BJ (cell line): ENCODE measurements at regions of chr5 and their contacts with region 1.

Region 1: DNA sequence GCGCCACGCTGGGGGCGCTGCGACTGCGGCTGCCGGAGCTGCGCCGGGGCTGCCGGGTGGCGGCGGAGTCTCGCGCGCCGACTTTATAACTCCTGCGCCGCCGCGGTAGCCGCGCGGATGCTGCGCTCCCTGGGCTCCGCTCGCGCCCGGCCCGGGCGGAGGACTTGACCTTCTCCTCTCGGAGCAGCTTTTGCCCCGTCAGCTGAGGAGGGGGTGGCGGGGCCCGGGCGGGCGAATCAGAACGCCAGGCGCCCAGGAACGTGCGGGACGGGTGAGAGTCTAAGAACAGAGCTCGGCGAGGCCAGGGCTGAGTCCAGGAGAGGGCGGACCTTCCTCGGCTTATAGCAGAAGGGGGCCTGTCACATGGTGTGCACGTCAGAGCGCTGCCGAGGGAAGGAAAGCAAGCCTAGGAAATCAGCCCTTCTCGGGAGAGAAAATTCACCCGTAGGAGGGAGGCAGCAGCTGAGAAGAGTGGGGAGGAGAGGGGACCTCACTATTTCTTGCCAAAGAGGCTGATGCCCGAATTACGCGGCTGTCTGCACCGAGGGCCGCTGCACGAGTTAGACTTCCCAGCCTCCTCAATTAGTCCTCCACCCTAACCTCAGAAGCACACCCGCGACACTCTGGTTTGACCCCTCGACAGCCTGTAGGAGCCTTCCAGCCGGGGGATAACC is at the start of gene FOXD1:
- DNase-seq: peak; percentile 65
- H3K4me3 ChIP-seq: peak within 1 kb of the TSS; percentile 80
- H3K27me3 ChIP-seq: peaks cover 5% of the 10 kb centered on the region
- CTCF ChIP-seq: peak; percentile 11; the same call in 1 of the 2 replicates
- polyA plus RNA-seq, gene FOXD1: 4.3 and 4.9 TPM in 2 replicates

Region 2: GRCh38 chr5:73088026-73088425 is 360.6 kb before region 1 on chr5:
- CTCF ChIA-PET with region 1: interaction called, 20 read pairs
- POLR2A ChIA-PET with region 1: no interaction called
- DNase-seq: no peak
- H3K4me3 ChIP-seq: no peak overlapping the region
- H3K27me3 ChIP-seq: no peaks in the 10 kb centered on the region
- CTCF ChIP-seq: no peak

Region 3: DNA sequence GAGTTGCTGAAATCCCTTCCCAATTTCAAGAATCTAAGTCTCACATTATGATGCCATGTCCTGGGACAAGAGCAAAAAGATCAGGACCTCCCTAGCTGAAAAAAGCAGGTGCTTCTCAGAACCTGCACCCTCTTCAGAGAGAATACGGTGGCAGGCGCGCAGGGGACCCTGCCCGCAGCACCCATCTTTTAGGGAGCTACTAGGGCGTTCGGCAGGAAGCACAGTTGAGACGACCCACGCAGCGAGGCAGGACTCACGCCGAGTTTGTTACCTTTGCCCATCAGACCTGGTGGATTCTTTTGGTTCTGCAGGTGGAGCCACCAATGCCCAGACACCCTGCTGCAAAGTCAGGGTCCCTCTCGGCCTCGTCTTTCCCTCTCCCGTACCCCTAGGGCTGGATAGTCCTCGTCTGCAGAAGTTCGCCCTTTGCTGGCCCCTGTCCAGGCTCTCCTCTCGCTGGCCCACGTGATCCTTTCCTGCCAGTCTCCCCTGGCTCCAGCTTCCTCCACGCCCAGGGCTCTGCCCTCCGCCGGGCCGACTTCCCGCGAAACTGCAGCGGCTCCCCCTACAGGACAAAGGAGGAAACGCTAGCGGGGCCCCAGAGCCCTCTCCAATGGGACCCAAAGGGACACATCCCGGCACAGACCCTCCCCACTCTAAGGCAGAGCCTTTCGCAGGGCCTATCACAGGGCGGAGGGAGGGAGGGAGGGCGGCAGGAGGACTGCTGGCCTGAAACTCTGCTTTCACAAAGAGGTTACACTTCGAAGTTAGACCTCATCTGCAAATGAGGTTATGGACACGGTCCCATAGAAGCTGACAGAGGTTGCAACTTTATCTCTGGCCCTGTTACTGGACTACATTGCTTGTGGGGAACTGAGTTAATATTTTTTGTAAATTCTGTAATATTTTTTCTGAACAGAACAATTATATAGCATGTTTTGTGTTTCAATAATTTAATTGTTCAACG is 246.8 kb before region 1 on chr5:
- CTCF ChIA-PET with region 1: interaction called, 22 read pairs
- POLR2A ChIA-PET with region 1: no interaction called
- DNase-seq: no peak
- H3K4me3 ChIP-seq: no peak overlapping the region
- H3K27me3 ChIP-seq: peaks cover 13% of the 10 kb centered on the region
- CTCF ChIP-seq: peak; percentile 93

Region 4: DNA sequence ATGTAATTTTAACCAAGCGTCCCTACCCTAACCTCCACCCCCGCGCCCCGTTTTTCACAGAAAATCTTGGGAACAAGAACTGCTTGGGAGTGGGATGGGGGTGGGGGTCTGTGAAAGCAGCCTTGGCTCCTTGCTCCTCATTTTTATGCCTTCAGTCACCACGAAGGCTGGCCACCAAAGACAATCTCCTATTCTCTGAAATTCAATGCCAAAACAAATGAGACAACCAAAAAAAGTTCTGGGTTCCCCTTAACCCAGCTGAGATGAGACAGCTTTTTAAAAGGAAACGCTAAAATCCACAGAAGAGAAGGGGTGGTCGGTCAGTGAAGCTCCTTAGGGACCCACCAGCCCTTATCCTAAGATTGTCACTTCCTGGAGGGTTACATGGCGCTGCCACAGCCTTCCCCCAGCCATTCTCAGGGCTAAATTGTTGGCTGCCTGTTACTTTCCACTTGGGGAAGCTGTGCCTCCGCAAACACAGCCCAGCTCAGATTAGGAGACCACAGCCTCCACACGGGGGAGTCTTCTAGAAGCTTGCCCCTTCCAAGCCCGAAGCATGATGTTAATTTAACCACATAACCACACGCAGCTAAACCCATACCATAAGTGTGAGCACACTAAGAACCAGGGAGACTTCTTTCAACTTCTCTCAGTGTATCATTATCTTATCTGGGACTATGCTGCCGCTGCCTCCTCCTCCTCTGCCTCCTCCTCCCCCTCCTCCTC is 136.3 kb before region 1 on chr5:
- CTCF ChIA-PET with region 1: interaction called, 22 read pairs
- POLR2A ChIA-PET with region 1: interaction called, 4 read pairs
- DNase-seq: no peak
- H3K4me3 ChIP-seq: no peak overlapping the region
- H3K27me3 ChIP-seq: no peaks in the 10 kb centered on the region
- CTCF ChIP-seq: peak; percentile 60

Region 5: DNA sequence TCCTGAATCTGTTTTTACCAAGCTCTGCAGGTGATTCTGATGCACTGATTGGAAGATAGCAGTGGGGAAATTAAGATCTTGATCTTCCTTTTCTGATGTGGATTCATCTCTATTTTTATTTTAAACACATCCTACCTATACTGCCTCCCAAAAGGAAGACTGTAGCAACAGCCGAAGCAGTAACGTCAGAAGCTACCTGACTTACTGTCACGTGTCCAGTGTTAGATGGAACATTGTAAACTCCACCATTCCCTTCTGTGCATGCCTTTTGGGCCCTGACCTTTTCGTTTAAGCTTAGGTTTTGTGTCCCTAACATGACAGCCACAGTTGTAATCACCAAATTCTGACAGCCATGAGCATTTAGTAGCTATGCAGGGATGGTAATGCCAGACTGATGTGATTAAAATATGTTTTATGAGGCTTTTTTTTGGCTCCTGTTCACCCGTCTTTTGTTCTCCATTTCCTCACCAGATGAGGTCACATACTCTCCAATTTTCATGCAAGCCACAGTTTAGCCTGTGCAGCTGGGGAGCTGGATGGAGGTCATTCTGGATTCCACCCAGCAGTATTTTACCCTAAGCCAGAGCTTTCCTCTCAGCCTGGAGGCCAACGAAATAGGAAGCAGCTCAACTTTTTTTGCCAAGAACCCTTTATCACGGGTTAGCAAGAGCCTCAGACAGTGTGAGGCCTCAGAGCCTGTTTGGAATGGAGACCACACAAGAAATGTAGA is 15.6 kb after region 1 on chr5:
- CTCF ChIA-PET with region 1: interaction called, 23 read pairs
- POLR2A ChIA-PET with region 1: no interaction called
- DNase-seq: peak; percentile 43
- H3K4me3 ChIP-seq: no peak overlapping the region
- H3K27me3 ChIP-seq: 0 out of 2 replicates have a peak, but pooled peaks cover 1% of the 10 kb centered on the region
- CTCF ChIP-seq: no peak